Activated B cell treated with CpG ODN at 0.5 μM for 24 hours (primary cell): ENCODE measurements at regions of chr2 and their contacts with region 1.

Region 1: GRCh38 chr2:149446748-149447147 is 116.4 kb downstream of the LYPD6 start:
- DNase-seq: no peak
- ATAC-seq: no peak
- H3K4me3 Mint-ChIP-seq: no peak overlapping the region
- H3K27ac Mint-ChIP-seq: no peak overlapping the region
- H3K4me1 Mint-ChIP-seq: no peaks in the 10 kb centered on the region
- H3K27me3 Mint-ChIP-seq: no peaks in the 10 kb centered on the region
- CTCF ChIP-seq: no peak

Region 2: DNA sequence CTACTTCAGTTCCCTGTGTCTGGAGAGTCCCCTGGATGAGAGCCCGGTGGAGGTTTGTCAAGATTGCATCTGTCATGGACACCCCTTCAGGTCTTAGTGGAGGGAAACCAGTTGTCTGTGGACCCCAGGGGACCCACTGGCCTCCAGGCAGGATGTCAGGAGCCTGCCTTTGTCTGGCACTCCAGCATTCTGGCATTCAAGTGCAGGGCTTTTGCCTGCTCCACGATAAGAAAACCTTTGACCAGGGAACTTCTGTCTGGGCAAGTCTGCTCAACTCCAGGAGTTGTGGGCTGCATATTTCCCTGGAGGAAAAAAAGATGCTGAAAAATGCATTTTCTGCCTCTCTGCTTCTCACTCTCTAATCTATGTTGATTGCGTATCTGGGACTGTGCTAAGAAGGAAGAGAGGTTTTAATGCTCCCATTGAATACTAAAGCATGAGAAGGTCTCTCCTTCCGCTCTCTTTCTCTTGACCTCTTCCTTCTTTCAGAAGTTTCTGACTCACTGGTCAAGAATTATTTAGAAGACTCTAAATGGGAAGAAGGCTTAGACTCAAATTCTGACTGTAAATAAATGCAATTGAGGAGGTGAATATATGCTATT is 36.4 kb after region 1 on chr2:
- CTCF ChIA-PET with region 1: no interaction called
- POLR2A ChIA-PET with region 1: no interaction called
- intact Hi-C with region 1: loop called (anchors 1 kb)
- DNase-seq: no peak
- ATAC-seq: no peak
- H3K4me3 Mint-ChIP-seq: no peak overlapping the region
- H3K27ac Mint-ChIP-seq: no peak overlapping the region
- H3K4me1 Mint-ChIP-seq: no peaks in the 10 kb centered on the region
- H3K27me3 Mint-ChIP-seq: peaks cover 10% of the 10 kb centered on the region
- CTCF ChIP-seq: no peak